ENCODE measurements at regions of chr16 and their contacts with region 1.

Region 1: GRCh38 chr16:66961065-66961744 is at the start of gene CES3:
- DNase-seq: peak; percentile 82
- H3K4me3 ChIP-seq: peak within 1 kb of the TSS; percentile 6 to 50; a peak in 1 of 4 replicates
- H3K27ac ChIP-seq: no peak within 1 kb of the TSS; a peak in 1 of 4 replicates
- H3K4me1 ChIP-seq: peaks cover 0 to 16% of the 10 kb centered on the region in 2 experiments; a peak in 1 of 4 replicates
- H3K27me3 ChIP-seq: no peaks in the 10 kb centered on the region
- CTCF ChIP-seq: peak; percentile 81
- EP300 ChIP-seq: no peak
- RAD21 ChIP-seq: no peak
- polyA plus RNA-seq, gene CES3: 1.4 and 1.8 TPM in 2 replicates

Region 2: DNA sequence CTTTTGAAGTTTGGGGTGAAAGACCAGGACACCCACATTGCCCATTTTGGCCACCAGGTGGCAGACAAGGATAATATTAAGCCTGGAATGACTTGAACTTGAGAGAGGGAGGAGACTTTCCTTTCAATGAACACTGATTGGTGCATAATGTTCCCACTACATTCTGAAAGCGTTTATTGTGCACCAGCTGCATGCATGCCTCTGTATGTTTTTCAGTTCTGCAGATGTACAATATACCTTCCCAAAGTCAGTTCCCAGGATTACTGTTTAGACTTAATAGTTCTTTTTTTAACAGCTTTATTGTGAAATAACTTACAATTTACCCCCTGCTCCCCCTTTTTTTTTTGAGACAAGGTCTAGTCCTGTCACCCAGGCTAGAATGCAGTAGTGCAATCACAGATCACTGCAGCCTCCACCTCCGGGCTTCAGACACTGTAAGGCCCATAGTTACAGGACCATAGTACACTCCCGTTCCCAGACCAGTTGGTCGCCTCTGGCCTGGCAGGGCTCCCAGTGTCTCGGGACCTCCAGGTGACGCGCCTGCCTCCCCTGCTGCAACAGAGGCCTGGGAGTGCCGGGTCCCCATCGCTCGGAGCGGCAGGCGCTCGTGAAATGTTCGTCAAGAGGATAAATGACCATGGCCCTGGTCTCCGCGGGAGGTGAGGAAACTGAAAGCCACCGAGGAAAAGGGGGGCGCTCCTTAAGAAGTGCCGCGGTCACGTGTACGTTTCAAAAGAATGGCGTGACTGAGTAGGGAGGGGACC is 13.7 kb before region 1 on chr16:
- CTCF ChIA-PET with region 1: interaction called, 71 read pairs
- POLR2A ChIA-PET with region 1: no interaction called
- DNase-seq: peak; percentile 88
- H3K4me3 ChIP-seq: peak overlapping the region; percentile 45 to 57
- H3K27ac ChIP-seq: no peak overlapping the region
- H3K4me1 ChIP-seq: peaks cover 0 to 8% of the 10 kb centered on the region in 2 experiments; a peak in 1 of 4 replicates
- H3K27me3 ChIP-seq: no peaks in the 10 kb centered on the region
- CTCF ChIP-seq: peak; percentile 91
- EP300 ChIP-seq: no peak
- RAD21 ChIP-seq: peak; percentile 80

Region 3: DNA sequence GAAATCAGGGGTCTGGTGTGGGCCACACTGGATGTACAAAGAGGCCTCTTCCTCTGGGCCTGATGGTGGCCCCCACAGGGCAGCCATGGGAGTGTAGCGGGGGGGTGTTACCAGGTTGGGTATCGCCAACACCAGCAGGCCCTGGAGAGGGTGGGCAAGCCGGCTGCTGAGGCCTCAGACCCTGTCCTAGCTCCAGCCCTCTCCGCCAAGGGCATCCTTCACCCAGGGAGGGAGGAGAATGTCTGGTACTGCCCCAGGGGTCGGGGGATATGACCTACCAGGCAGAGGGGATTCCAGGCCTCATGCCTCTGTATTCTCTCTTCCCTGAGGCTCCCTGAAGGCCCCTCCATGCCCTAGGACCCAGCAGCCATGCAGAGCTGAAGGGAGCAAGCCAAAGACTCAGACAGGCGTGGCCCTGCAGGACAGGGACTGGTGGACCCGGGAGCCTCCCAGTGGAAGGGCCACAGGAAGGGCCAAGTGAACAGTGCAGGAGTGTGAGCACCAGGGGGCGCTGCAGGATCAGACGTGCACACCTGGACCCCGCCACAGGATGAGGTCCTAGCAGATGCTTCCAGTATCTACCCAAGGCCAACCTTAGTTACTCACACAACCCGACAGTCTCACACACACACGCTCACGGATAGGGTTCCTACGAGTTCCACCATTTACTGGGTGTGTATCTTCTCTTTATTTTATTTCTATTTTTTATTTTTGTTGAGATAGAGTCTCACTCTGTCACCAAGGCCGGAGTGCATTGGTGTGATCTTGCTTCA is 16.3 kb after region 1 on chr16:
- CTCF ChIA-PET with region 1: interaction called, 48 read pairs
- POLR2A ChIA-PET with region 1: no interaction called
- DNase-seq: peak; percentile 94
- H3K4me3 ChIP-seq: peak overlapping the region in 1 of 2 experiments; percentile 46; a peak in 1 of 4 replicates
- H3K27ac ChIP-seq: no peak overlapping the region
- H3K4me1 ChIP-seq: no peaks in the 10 kb centered on the region; a peak in 1 of 4 replicates
- H3K27me3 ChIP-seq: no peaks in the 10 kb centered on the region
- CTCF ChIP-seq: peak; percentile 93
- EP300 ChIP-seq: no peak
- RAD21 ChIP-seq: peak; percentile 99

Region 4: DNA sequence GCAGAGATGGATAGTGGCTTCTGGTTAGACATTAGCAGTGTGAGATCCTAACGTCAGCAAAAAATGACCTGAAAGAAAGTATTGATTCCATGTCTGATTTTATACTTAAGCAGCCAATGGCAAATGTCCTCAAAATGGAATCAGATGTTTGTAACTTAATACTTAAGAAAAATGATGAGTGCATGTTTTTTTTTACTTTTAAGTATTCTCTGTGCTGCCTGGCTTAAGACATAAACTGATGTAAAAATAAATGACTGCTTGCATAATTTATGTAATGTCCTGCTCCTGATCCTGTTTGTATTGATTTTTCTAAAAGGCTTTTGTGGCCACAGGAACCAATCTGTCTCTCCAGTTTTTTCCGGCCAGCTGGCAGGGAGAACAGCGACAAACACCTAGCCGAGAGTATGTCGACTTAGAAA is 75.1 kb after region 1 on chr16:
- CTCF ChIA-PET with region 1: no interaction called
- POLR2A ChIA-PET with region 1: no interaction called
- DNase-seq: no peak
- H3K4me3 ChIP-seq: no peak overlapping the region
- H3K27ac ChIP-seq: peak overlapping the region; percentile 44 to 58; a peak in 3 of 4 replicates
- H3K4me1 ChIP-seq: peaks cover 7 to 43% of the 10 kb centered on the region in 2 experiments
- H3K27me3 ChIP-seq: no peaks in the 10 kb centered on the region
- CTCF ChIP-seq: no peak
- EP300 ChIP-seq: peak in 1 of 2 experiments; percentile 37; a peak in 1 of 4 replicates
- RAD21 ChIP-seq: no peak

Region 5: DNA sequence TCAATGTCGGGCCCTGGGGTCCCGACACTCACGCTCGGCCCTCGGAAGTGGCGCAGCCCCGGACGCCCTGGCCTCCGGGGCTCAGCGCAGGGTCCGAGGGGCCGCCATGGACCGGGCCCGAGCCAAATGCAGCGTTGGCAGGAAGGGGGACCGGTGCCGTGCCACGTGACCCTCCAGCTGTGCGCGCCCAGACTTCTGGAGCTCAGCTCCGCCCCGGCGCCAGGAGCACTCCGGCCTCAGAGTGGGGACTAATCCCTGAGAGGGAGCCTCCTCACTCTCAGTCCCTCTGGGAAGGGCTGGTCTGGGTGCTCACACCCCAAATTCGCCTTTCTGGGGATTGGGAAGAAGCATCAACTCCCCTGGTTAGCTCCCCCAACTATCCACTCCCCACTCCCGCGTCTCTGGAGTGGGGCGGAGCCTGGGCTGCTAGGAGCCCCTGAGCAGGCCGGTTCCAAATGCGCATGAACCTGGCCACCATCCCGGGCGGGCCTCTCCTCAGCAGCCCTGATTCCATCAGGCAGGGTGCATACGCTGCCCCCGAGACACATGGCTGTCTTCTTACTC is 189.7 kb after region 1 on chr16 and contains the start of gene B3GNT9:
- CTCF ChIA-PET with region 1: interaction called, 82 read pairs
- POLR2A ChIA-PET with region 1: no interaction called
- DNase-seq: peak; percentile 92
- H3K4me3 ChIP-seq: peak within 1 kb of the TSS; percentile 54 to 66; a peak in 3 of 4 replicates
- H3K27ac ChIP-seq: peak within 1 kb of the TSS; percentile 26 to 90
- H3K4me1 ChIP-seq: peaks cover 0 to 11% of the 10 kb centered on the region in 2 experiments; a peak in 1 of 4 replicates
- H3K27me3 ChIP-seq: no peaks in the 10 kb centered on the region
- CTCF ChIP-seq: no peak
- EP300 ChIP-seq: no peak
- RAD21 ChIP-seq: no peak
- polyA plus RNA-seq, gene B3GNT9: 9.8 and 9.9 TPM in 2 replicates

Measured in SK-N-SH (cell line).